ENCODE measurements at regions of chr20 and their contacts with region 1.

Region 1: GRCh38 chr20:53216856-53217576 is 244.9 kb downstream of the TSHZ2 start:
- DNase-seq: peak; percentile 69 to 90 (median 83)
- ATAC-seq: peak; percentile 82
- H3K4me3 ChIP-seq: peak overlapping the region; percentile 35
- H3K4me3 Mint-ChIP-seq: peak overlapping the region; percentile 70
- H3K27ac ChIP-seq: no peak overlapping the region
- H3K27ac Mint-ChIP-seq: peak overlapping the region; percentile 78
- H3K4me1 ChIP-seq: peaks cover 28% of the 10 kb centered on the region
- H3K4me1 Mint-ChIP-seq: peaks cover 44% of the 10 kb centered on the region
- H3K27me3 ChIP-seq: no peaks in the 10 kb centered on the region
- H3K27me3 Mint-ChIP-seq: no peaks in the 10 kb centered on the region
- CTCF ChIP-seq: peak; percentile 99

Region 2: DNA sequence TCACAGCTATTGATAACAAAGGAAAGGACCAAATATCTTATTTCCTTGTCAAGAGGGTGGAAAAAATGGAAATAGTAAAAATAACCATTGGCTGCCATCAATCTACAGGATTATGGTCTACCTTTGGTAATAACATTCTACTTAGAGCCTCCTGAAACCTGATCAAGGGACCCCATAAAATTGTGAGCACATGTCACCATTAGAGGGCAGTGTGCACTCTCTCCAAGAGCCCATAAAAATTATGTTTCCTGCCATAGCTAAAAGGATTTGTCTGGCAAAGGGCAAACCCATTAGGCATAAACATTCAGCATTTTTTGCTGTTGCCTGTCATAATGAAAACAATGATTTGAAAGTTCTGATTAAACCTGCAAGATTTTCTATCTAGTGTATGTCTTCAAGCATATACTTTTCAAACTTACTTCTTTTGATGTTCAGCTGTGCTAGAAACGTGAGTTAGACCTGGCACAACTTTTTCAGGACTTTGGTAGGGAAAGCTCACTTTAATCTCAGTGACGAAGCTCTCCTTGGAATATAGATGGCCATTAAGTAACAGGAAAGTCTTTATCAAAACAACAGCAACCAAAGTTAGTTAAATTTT is 904.8 kb before region 1 on chr20:
- CTCF ChIA-PET with region 1: interaction called, 9 read pairs
- POLR2A ChIA-PET with region 1: interaction called, 3 read pairs
- intact Hi-C with region 1: loop called (anchors 1 kb)
- DNase-seq: peak in 13 of 14 experiments; percentile 20 to 83 (median 47)
- ATAC-seq: peak; percentile 73
- H3K4me3 ChIP-seq: no peak overlapping the region
- H3K4me3 Mint-ChIP-seq: no peak overlapping the region
- H3K27ac ChIP-seq: no peak overlapping the region
- H3K27ac Mint-ChIP-seq: no peak overlapping the region
- H3K4me1 ChIP-seq: peaks cover 4% of the 10 kb centered on the region
- H3K4me1 Mint-ChIP-seq: peaks cover 38% of the 10 kb centered on the region
- H3K27me3 ChIP-seq: no peaks in the 10 kb centered on the region
- H3K27me3 Mint-ChIP-seq: no peaks in the 10 kb centered on the region
- CTCF ChIP-seq: peak; percentile 88

Region 3: DNA sequence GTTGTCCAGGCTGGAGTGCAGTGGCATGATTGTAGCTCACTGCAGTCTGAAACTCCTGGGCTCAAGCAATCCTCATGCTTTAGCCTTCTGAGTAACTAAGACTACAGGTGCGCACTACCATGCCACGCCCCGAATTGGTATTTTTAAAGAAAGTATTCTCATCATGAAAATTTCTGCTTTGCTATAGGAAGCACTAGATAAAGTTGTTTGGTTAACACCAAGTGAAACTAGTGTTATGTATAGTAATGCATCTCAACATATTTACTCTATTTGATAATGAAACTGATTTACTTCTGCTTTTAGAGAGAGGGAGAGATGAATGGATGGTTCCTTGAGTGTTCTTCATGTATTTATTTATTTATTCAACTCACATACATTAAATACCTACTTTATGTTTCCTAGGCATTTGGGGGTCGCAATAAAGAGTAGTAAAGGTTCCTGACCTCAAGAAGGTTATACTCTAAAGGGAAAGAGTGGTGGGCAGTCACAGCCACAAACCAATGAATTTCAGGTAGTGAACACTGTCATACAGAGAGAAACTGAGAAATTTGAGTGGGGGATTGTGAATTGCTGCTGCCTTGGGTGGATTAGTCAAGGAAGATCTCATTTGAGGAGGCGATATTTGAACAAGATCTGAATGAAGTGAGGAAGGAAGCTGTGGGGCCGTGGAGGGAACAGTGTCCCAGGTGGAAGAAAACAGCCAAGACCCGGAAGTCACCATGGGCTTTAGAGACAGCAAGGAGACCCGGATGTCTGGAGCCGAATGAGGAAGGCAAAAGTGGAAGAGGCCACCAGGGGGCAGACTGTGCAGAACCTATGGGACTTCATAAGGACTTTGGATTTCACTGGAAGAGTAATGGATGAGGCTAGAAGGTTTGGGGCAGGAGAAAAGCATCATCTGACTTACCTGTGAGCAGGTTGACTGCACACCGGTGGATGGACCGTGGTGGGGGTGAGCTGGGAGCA is 59.3 kb before region 1 on chr20:
- CTCF ChIA-PET with region 1: no interaction called
- POLR2A ChIA-PET with region 1: no interaction called
- intact Hi-C with region 1: loop called (anchors 5 kb)
- DNase-seq: peak in 11 of 14 experiments; percentile 5 to 58 (median 20)
- ATAC-seq: no peak
- H3K4me3 ChIP-seq: no peak overlapping the region
- H3K4me3 Mint-ChIP-seq: no peak overlapping the region
- H3K27ac ChIP-seq: no peak overlapping the region
- H3K27ac Mint-ChIP-seq: no peak overlapping the region
- H3K4me1 ChIP-seq: no peaks in the 10 kb centered on the region
- H3K4me1 Mint-ChIP-seq: peaks cover 39% of the 10 kb centered on the region
- H3K27me3 ChIP-seq: no peaks in the 10 kb centered on the region
- H3K27me3 Mint-ChIP-seq: no peaks in the 10 kb centered on the region
- CTCF ChIP-seq: peak; percentile 50

Region 4: DNA sequence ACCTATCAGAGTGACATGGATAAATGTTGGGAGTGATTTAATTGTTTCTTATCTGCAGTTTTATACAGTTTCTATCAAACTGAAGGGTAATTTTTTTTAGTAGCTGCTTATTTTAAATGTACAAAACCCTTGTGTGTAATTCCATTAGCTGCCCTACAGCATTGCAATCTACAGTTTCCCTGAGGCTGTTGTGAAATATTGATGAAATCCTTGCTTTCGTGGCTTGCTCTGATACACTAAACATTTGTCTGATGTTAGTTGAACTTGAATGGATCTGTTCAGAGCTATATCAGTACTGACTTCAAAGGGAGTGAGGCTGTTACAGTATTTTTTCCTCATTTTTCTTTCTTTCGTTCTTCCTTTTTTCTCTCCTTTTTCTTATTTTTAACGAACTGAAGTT is 10.5 kb after region 1 on chr20:
- CTCF ChIA-PET with region 1: no interaction called
- POLR2A ChIA-PET with region 1: no interaction called
- intact Hi-C with region 1: no loop called
- DNase-seq: no peak
- ATAC-seq: no peak
- H3K4me3 ChIP-seq: no peak overlapping the region
- H3K4me3 Mint-ChIP-seq: no peak overlapping the region
- H3K27ac ChIP-seq: no peak overlapping the region
- H3K27ac Mint-ChIP-seq: no peak overlapping the region
- H3K4me1 ChIP-seq: no peaks in the 10 kb centered on the region
- H3K4me1 Mint-ChIP-seq: peaks cover 4% of the 10 kb centered on the region
- H3K27me3 ChIP-seq: peaks cover 0 to 4% of the 10 kb centered on the region in 2 experiments
- H3K27me3 Mint-ChIP-seq: peaks cover 12% of the 10 kb centered on the region
- CTCF ChIP-seq: no peak

Region 5: DNA sequence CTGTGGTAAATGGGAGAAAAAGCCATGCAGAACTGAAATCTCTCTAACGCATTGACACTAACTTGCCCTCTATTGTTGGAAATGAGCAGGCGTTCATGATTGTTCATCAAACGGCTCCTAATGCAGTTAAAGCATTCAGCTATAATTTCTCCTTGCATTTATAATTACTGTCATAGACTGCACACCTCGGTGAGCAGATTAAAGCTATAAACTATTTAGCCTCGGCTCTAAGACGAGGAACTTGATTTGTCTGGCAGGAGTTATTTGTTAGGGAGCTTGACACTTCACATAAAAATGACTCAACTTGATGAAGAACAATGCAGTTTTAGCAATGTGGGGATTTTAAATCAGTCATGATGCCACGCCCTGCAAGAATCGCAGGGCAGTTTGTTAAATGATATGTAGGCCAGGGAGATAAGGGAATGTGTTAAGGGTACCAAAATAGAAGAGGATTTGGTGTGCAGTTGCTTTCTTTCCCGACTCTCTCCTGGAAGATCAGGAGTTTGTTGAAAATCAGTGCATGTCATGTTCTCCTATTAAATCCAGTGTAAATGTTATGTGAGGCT is 45.4 kb after region 1 on chr20:
- CTCF ChIA-PET with region 1: no interaction called
- POLR2A ChIA-PET with region 1: no interaction called
- intact Hi-C with region 1: no loop called
- DNase-seq: no peak
- ATAC-seq: no peak
- H3K4me3 ChIP-seq: no peak overlapping the region
- H3K4me3 Mint-ChIP-seq: no peak overlapping the region
- H3K27ac ChIP-seq: no peak overlapping the region
- H3K27ac Mint-ChIP-seq: no peak overlapping the region
- H3K4me1 ChIP-seq: no peaks in the 10 kb centered on the region
- H3K4me1 Mint-ChIP-seq: no peaks in the 10 kb centered on the region
- H3K27me3 ChIP-seq: no peaks in the 10 kb centered on the region
- H3K27me3 Mint-ChIP-seq: peaks cover 6% of the 10 kb centered on the region
- CTCF ChIP-seq: no peak

Region 6: GRCh38 chr20:53939572-53940359 is 722.8 kb after region 1 on chr20:
- CTCF ChIA-PET with region 1: no interaction called
- POLR2A ChIA-PET with region 1: no interaction called
- intact Hi-C with region 1: loop called in 1 of 2 experiments (anchors 10 kb)
- DNase-seq: peak; percentile 35 to 85 (median 56)
- ATAC-seq: peak; percentile 75
- H3K4me3 ChIP-seq: no peak overlapping the region
- H3K4me3 Mint-ChIP-seq: no peak overlapping the region
- H3K27ac ChIP-seq: no peak overlapping the region
- H3K27ac Mint-ChIP-seq: no peak overlapping the region
- H3K4me1 ChIP-seq: peaks cover 17% of the 10 kb centered on the region
- H3K4me1 Mint-ChIP-seq: peaks cover 47% of the 10 kb centered on the region
- H3K27me3 ChIP-seq: no peaks in the 10 kb centered on the region
- H3K27me3 Mint-ChIP-seq: no peaks in the 10 kb centered on the region
- CTCF ChIP-seq: peak; percentile 76